ENCODE measurements at regions of chr2 and their contacts with region 1.

Region 1: DNA sequence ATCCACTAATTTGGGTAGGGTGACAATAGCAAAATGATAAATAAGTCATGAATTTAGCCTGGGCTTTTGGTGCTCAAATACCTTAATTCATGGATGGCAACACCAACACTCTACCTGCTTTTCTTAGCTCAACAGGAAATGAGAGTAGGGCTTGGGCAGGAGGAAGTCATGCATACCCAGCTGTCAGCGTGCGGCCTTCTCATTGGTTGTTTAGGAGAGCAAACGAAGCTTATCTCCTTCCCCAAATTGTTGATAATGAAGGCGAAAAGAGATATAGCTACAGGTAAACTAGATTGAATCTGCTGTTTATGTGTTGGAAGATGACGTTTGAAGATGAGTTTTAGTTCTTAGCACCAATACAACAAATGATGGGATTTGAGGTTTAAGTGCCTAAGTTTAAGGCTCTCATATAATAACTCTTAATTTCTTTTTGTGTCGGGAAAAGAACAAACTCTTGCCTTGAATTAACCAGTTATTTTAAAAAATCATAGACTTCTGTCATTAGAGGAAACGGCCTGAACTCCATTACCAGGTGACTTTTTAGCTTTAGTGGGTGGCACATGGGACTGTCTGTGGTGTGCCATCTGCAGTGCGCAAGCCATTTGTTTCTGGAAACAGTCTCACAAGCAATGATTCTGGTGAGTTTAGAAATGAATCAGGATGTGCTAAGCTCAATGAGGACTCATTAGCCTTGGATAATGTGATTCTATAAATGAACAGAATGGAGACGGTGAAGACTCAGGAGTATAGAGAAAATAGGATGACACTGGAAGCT is 19.8 kb downstream of the MAP4K4 start:
- DNase-seq: peak; percentile 71
- ATAC-seq: peak; percentile 50
- H3K4me3 Mint-ChIP-seq: peak overlapping the region; percentile 9
- H3K27ac Mint-ChIP-seq: peak overlapping the region; percentile 92
- H3K4me1 Mint-ChIP-seq: peaks cover 90% of the 10 kb centered on the region
- H3K27me3 Mint-ChIP-seq: no peaks in the 10 kb centered on the region

Region 2: DNA sequence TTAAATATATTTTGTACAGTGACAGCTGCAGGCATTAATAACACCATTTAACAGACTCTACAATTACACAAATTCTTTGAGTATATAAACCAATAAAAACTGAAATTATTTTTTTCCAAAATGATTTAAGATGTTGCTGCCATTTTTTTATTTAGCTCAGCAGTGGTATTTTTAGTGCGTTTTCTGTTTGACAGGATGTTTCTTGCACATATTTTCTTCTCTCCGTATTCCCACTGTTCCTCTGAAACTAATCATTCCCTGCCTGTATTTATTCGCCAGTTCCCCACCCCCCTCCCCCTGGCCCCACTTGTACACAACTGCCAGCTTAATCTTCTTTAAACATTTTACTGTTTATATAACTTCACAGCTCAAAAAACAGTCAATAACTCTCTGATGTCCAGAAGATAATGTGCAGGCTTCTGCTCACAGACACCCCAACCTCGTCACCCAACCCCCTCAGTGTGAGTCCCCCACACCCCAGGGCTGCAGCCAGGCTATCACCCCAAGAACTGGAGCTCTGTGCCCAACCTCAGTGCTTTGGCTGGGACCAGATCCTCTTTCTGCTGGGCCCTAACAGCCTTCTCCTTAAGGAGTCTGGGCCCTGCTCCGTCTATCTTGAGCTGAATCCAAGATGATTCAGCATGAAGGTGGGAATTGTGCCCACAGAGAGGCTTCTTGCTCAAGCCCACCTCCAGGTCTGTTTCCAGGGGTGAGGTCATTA is 61.4 kb before region 1 on chr2:
- CTCF ChIA-PET with region 1: no interaction called
- POLR2A ChIA-PET with region 1: no interaction called
- intact Hi-C with region 1: loop called in 1 of 2 experiments (anchors 2 kb)
- DNase-seq: no peak
- ATAC-seq: no peak
- H3K4me3 Mint-ChIP-seq: no peak overlapping the region
- H3K27ac Mint-ChIP-seq: no peak overlapping the region
- H3K4me1 Mint-ChIP-seq: peaks cover 22% of the 10 kb centered on the region
- H3K27me3 Mint-ChIP-seq: no peaks in the 10 kb centered on the region

Region 3: GRCh38 chr2:101704046-101704466 is 13.2 kb before region 1 on chr2:
- CTCF ChIA-PET with region 1: interaction called, 24 read pairs
- POLR2A ChIA-PET with region 1: interaction called, 9 read pairs
- intact Hi-C with region 1: loop called (anchors 1 to 2 kb)
- DNase-seq: peak; percentile 54
- ATAC-seq: peak; percentile 18
- H3K4me3 Mint-ChIP-seq: peak overlapping the region; percentile 53
- H3K27ac Mint-ChIP-seq: peak overlapping the region; percentile 90
- H3K4me1 Mint-ChIP-seq: peaks cover 74% of the 10 kb centered on the region
- H3K27me3 Mint-ChIP-seq: no peaks in the 10 kb centered on the region

Region 4: DNA sequence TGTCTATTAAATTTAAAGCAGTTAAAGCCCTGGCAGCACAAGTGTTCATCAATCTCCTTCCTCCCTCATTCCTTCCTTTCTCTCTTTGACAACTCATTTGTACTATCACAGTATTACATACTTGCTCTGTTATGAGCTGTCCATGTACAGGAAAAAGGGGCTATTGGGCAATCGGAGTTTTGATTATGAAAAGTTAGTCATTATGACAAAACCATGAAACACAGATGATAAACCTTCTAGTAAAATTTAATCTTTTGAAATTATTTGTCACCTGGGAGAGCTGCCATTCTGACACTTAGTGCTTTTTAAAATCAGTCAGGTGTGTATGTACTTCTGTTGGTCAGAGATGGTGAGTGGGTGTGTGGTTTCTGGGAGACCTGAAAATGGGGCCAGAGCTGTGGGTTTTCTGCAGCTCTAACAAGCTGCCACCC is 19.6 kb after region 1 on chr2:
- CTCF ChIA-PET with region 1: interaction called, 15 read pairs
- POLR2A ChIA-PET with region 1: interaction called, 7 read pairs
- intact Hi-C with region 1: loop called (anchors 1 kb)
- DNase-seq: peak; percentile 77
- ATAC-seq: peak; percentile 86
- H3K4me3 Mint-ChIP-seq: no peak overlapping the region
- H3K27ac Mint-ChIP-seq: peak overlapping the region; percentile 51
- H3K4me1 Mint-ChIP-seq: peaks cover 84% of the 10 kb centered on the region
- H3K27me3 Mint-ChIP-seq: no peaks in the 10 kb centered on the region

Region 5: GRCh38 chr2:101823347-101823791 is 106.1 kb after region 1 on chr2:
- CTCF ChIA-PET with region 1: interaction called, 10 read pairs
- POLR2A ChIA-PET with region 1: no interaction called
- intact Hi-C with region 1: loop called in 1 of 2 experiments (anchors 5 kb)
- DNase-seq: peak; percentile 83
- ATAC-seq: peak; percentile 79
- H3K4me3 Mint-ChIP-seq: peak overlapping the region; percentile 20
- H3K27ac Mint-ChIP-seq: peak overlapping the region; percentile 83
- H3K4me1 Mint-ChIP-seq: peaks cover 73% of the 10 kb centered on the region
- H3K27me3 Mint-ChIP-seq: no peaks in the 10 kb centered on the region

Measured in activated CD4-positive, alpha-beta T cell treated with anti-CD3 and anti-CD28 coated beads for 36 hours (primary cell).